GM10248 (cell line): ENCODE measurements at regions of chr5 and their contacts with region 1.

Region 1: GRCh38 chr5:32489791-32490582 is 45.4 kb upstream of the ZFR start:
- DNase-seq: peak; percentile 69
- CTCF ChIP-seq: peak; percentile 64

Region 2: DNA sequence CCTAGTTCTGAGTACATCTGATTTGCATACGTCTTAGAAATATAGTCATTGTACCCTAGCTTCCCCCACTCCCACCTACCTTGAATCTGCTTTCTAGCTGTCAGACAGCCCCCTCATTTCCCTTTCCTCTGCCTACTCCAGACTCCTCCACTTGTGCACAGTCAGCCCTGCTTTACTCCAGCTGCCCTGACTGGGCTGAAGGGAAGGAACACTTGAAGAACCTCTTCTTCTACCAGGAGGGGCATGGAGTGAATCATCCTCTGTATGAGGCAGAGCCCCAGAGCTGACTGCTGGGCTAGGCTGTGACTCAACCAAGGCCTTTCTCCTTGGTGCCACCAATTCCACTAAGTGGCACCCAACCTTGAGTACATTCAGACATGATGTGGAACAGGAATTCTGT is 27.4 kb before region 1 on chr5:
- CTCF ChIA-PET with region 1: interaction called, 18 read pairs
- POLR2A ChIA-PET with region 1: no interaction called
- DNase-seq: no peak
- CTCF ChIP-seq: no peak

Region 3: DNA sequence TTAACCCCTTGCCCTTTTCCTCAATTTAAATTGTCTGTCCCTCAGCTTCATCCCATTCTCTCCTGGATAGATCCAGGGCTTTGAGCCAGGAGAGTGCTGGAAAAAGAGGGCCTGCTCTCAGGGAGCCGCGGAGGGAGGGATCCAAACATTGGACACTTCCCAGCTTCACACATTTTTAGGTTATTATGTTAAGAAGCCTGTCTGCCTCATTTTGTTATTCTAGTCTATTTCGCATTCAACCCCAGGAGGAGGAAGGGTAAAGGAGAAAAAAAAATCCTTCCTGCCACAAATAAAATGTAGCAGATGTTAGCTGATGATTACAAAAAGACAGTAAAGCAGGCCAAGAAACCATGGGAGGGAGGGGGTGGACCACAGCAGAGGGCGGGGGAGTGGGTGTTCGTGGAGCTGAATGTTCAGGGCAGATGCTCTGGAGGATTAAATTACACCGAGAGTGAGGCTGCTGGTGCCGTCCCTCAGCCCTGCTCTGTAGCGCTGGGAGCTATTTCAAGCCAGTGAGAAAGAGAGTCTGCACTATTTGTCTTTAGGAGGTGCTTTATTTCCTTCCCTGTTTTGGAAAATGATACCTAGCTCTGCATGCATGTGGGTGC is 15.1 kb after region 1 on chr5:
- CTCF ChIA-PET with region 1: interaction called, 40 read pairs
- POLR2A ChIA-PET with region 1: no interaction called
- DNase-seq: no peak
- CTCF ChIP-seq: no peak

Region 4: GRCh38 chr5:32538031-32538547 is 48.1 kb after region 1 on chr5:
- CTCF ChIA-PET with region 1: interaction called, 17 read pairs
- POLR2A ChIA-PET with region 1: no interaction called
- DNase-seq: peak; percentile 70
- CTCF ChIP-seq: no peak

Region 5: DNA sequence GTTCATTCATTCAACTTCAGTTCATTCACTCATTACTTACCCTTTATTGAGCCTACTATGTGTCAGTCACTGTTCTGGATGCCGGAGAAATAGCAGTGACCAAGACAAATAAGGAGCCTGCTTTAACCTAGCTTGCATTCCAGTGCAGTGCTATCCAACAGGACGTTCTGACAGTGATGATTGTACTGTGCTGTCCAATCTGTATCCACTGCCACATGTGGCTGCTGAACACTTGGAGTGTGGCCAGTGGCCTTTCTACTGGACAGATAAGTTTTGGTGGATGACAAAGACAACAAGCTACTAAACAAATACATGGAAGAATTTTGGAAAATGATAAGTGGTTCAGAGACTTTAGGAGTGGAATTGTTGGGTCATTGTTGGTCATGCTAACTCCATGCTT is 129.0 kb after region 1 on chr5:
- CTCF ChIA-PET with region 1: interaction called, 73 read pairs
- POLR2A ChIA-PET with region 1: no interaction called
- DNase-seq: no peak
- CTCF ChIP-seq: no peak